ENCODE measurements at regions of chr4 and their contacts with region 1.

Region 1: DNA sequence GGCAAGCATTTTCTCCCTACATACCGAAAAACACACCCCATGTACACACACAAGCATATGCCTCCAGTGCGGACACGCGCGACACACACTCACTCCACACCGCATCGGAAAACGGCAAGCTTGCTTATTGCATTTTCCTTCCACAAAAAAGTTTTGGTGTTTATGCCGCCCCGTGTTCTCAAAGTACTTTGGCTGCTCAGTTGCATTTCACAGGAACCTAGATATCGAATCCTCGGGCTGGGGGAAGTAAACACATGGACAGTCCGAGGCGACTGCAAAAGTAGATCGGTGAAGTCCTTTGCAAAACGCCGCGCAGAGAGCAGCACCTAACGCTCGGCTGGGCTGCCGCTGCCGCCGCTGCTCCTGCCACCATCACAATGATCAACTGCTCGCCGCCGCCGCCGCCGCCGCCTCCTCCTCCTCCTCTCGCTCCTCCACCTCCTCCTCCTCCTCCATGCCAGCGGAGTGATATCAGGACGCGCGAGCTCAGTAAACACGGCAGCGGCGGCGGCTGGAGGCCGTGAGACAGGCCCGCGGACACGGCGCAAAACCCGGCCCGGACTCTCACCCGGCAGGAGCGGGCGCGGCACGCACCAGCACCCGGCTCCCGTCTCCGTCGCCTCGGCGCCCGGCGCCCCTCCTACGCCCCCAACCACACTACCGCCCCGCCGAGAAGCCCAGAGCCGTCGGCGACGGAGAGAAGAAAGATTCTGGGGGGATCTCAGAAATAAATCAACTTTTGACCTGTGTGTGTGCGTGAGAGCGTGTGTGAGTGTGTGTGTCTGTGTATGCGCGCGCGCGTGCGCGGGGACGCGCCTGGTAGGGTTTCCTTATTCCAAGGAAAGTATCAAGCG is at the start of gene MAML3:
- DNase-seq: peak; percentile 73 to 89 (median 83)
- ATAC-seq: peak; percentile 58
- H3K4me3 ChIP-seq: peak within 1 kb of the TSS; percentile 99
- H3K4me3 Mint-ChIP-seq: peak within 1 kb of the TSS; percentile 89 to 100 (median 96)
- H3K27ac ChIP-seq: peak within 1 kb of the TSS; percentile 84
- H3K27ac Mint-ChIP-seq: peak within 1 kb of the TSS; percentile 81 to 96 (median 93)
- H3K4me1 ChIP-seq: peaks cover 0 to 13% of the 10 kb centered on the region in 2 donors
- H3K4me1 Mint-ChIP-seq: peaks cover 4 to 47% (median 32%) of the 10 kb centered on the region in 7 donors
- H3K27me3 ChIP-seq: no peaks in the 10 kb centered on the region
- H3K27me3 Mint-ChIP-seq: peaks cover 0 to 75% (median 0%) of the 10 kb centered on the region in 5 donors
- total RNA-seq, gene MAML3: 1.4 to 9.4 (median 3.6) TPM

Region 2: GRCh38 chr4:139301113-139301820 is 852.7 kb before region 1 on chr4 and contains the start of gene NAA15:
- CTCF ChIA-PET with region 1: no interaction called
- POLR2A ChIA-PET with region 1: no interaction called
- intact Hi-C with region 1: loop called (anchors 1 to 5 kb)
- DNase-seq: peak; percentile 88 to 99 (median 97)
- ATAC-seq: peak; percentile 95
- H3K4me3 ChIP-seq: peak within 1 kb of the TSS; percentile 83
- H3K4me3 Mint-ChIP-seq: peak within 1 kb of the TSS; percentile 96 to 100 (median 100)
- H3K27ac ChIP-seq: peak within 1 kb of the TSS; percentile 92
- H3K27ac Mint-ChIP-seq: peak within 1 kb of the TSS; percentile 97 to 100 (median 99)
- H3K4me1 ChIP-seq: peaks cover 22 to 28% of the 10 kb centered on the region in 2 donors
- H3K4me1 Mint-ChIP-seq: peaks cover 17 to 76% (median 58%) of the 10 kb centered on the region in 7 donors
- H3K27me3 ChIP-seq: no peaks in the 10 kb centered on the region
- H3K27me3 Mint-ChIP-seq: no peaks in the 10 kb centered on the region
- total RNA-seq, gene NAA15: 41.2 to 67.4 (median 49.0) TPM

Region 3: DNA sequence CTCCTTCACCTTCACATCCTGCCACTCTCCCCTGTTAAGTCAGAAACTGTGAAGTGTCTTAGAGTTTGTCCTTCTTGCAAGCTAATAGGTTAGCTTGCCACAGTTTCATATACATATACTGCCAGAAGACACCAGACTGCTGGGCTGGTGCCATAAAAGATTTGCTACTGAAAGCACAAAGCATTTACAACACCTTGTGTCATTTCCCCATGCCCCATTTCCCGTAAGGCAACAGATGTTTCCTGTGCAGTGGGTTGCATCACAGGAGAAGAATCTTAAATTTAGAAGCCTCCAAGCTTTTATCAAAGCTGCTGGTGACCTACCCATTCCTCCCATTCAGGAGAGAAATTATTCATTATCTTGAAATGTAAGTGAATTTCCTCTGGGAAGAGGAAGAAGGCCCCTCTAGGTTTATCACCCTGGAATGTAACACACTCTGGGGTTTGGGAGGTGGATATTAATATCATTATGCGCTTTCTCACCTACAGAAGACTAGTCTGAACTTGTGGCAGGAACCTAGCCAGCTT is 734.5 kb before region 1 on chr4:
- CTCF ChIA-PET with region 1: no interaction called
- POLR2A ChIA-PET with region 1: no interaction called
- intact Hi-C with region 1: no loop called
- DNase-seq: peak in 4 of 9 donors; percentile 7 to 29 (median 14)
- ATAC-seq: peak; percentile 72
- H3K4me3 ChIP-seq: no peak overlapping the region
- H3K4me3 Mint-ChIP-seq: peak overlapping the region in 3 of 10 donors; percentile 30 to 49 (median 40)
- H3K27ac ChIP-seq: no peak overlapping the region
- H3K27ac Mint-ChIP-seq: peak overlapping the region in 7 of 9 donors; percentile 29 to 76 (median 64)
- H3K4me1 ChIP-seq: no peaks in the 10 kb centered on the region
- H3K4me1 Mint-ChIP-seq: peaks cover 0 to 19% (median 13%) of the 10 kb centered on the region in 7 donors
- H3K27me3 ChIP-seq: no peaks in the 10 kb centered on the region
- H3K27me3 Mint-ChIP-seq: no peaks in the 10 kb centered on the region

Region 4: DNA sequence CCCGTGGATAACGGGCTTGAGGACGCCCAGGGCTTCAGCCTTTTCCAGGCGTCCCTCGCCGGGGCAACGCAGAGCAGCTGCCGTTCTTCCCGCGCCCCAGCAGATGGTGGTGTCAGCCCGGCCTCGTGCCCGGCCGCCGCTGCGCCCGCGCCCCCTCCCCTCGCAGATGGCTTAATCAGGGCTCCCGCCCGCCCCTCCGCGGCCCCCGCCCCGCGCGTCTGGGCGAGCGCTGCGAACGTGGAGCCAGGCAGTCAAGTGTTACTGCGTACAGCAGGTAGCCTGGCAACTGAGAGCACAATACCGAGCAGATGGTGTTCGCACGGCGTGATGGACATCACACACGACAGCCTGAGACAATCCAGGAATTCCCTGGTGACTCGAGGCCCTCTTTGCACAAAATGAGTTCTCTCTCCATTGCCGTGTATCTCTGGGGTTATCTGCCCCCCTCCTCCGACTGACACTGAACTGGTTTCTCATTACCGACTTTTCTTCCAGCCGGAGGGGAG is 419.0 kb before region 1 on chr4:
- CTCF ChIA-PET with region 1: no interaction called
- POLR2A ChIA-PET with region 1: no interaction called
- intact Hi-C with region 1: loop called (anchors 5 kb)
- DNase-seq: peak; percentile 12 to 67 (median 45)
- ATAC-seq: peak; percentile 87
- H3K4me3 ChIP-seq: peak overlapping the region; percentile 44
- H3K4me3 Mint-ChIP-seq: peak overlapping the region; percentile 70 to 89 (median 78)
- H3K27ac ChIP-seq: no peak overlapping the region
- H3K27ac Mint-ChIP-seq: peak overlapping the region in 1 of 9 donors; percentile 29
- H3K4me1 ChIP-seq: peaks cover 0 to 5% of the 10 kb centered on the region in 2 donors
- H3K4me1 Mint-ChIP-seq: peaks cover 6 to 17% (median 13%) of the 10 kb centered on the region in 7 donors
- H3K27me3 ChIP-seq: no peaks in the 10 kb centered on the region
- H3K27me3 Mint-ChIP-seq: peaks cover 30 to 58% (median 39%) of the 10 kb centered on the region in 5 donors

Region 5: DNA sequence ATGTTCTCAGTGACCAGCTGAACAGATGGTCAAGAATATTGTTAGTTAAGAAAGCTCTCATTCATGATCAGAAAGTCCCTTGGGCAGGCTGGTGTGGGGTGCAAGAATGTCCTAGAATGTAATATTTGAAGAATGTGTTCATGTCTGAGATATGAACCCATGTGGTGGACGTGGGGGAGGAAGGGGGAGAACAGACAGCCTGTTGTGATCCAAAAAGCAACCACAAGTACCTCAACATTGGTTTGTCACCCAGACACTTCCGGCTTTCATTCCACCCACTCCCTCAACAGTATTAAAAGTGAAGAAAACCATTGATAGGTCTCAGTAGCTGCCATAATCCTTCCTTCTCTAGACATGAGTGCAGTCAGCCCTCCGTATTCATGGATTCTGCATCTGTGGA is 82.1 kb before region 1 on chr4:
- CTCF ChIA-PET with region 1: interaction called, 5 read pairs
- POLR2A ChIA-PET with region 1: interaction called, 53 read pairs
- intact Hi-C with region 1: loop called (anchors 1 kb)
- DNase-seq: peak in 8 of 9 donors; percentile 62 to 84 (median 78)
- ATAC-seq: peak; percentile 91
- H3K4me3 ChIP-seq: peak overlapping the region; percentile 33
- H3K4me3 Mint-ChIP-seq: peak overlapping the region; percentile 69 to 91 (median 82)
- H3K27ac ChIP-seq: peak overlapping the region; percentile 54
- H3K27ac Mint-ChIP-seq: peak overlapping the region; percentile 84 to 98 (median 91)
- H3K4me1 ChIP-seq: peaks cover 18 to 30% of the 10 kb centered on the region in 2 donors
- H3K4me1 Mint-ChIP-seq: peaks cover 41 to 61% (median 56%) of the 10 kb centered on the region in 7 donors
- H3K27me3 ChIP-seq: no peaks in the 10 kb centered on the region
- H3K27me3 Mint-ChIP-seq: peaks cover 0 to 59% (median 0%) of the 10 kb centered on the region in 5 donors

Region 6: DNA sequence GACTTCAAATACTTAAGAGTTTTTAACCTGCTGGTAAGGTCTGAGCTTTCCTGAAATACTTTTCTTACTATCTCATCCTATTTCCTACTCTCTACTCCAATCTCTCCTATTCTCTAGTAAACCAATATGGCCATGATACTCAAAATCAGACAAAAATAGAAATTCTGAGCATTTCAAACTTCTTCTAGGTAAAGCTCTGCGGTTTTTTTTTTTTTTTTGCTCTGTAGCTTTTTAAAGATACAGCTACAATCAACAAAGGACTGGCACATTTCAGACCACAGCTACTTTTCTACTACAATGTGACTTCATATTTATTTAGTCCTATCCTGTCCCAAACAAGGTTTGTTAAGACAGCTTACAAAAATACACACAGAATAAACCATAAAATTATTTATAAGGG is 31.1 kb before region 1 on chr4:
- CTCF ChIA-PET with region 1: no interaction called
- POLR2A ChIA-PET with region 1: interaction called, 4 read pairs
- intact Hi-C with region 1: loop called (anchors 1 kb)
- DNase-seq: peak in 4 of 9 donors; percentile 13 to 34 (median 22)
- ATAC-seq: no peak
- H3K4me3 ChIP-seq: no peak overlapping the region
- H3K4me3 Mint-ChIP-seq: peak overlapping the region in 9 of 10 donors; percentile 36 to 76 (median 65)
- H3K27ac ChIP-seq: no peak overlapping the region
- H3K27ac Mint-ChIP-seq: peak overlapping the region in 6 of 9 donors; percentile 3 to 71 (median 9)
- H3K4me1 ChIP-seq: peaks cover 0 to 16% of the 10 kb centered on the region in 2 donors
- H3K4me1 Mint-ChIP-seq: peaks cover 6 to 29% (median 20%) of the 10 kb centered on the region in 7 donors
- H3K27me3 ChIP-seq: no peaks in the 10 kb centered on the region
- H3K27me3 Mint-ChIP-seq: peaks cover 0 to 45% (median 0%) of the 10 kb centered on the region in 5 donors

Region 7: GRCh38 chr4:140373328-140374129 is 219.6 kb after region 1 on chr4 and contains the start of gene SCOC:
- CTCF ChIA-PET with region 1: no interaction called
- POLR2A ChIA-PET with region 1: interaction called, 5 read pairs
- intact Hi-C with region 1: loop called (anchors 1 kb)
- DNase-seq: peak; percentile 80 to 98 (median 95)
- ATAC-seq: peak; percentile 98
- H3K4me3 ChIP-seq: peak within 1 kb of the TSS; percentile 79
- H3K4me3 Mint-ChIP-seq: peak within 1 kb of the TSS in 2 of 10 donors; percentile 87 to 90
- H3K27ac ChIP-seq: peak within 1 kb of the TSS; percentile 86
- H3K27ac Mint-ChIP-seq: peak within 1 kb of the TSS in 5 of 9 donors; percentile 47 to 90 (median 51)
- H3K4me1 ChIP-seq: peaks cover 6 to 7% of the 10 kb centered on the region in 2 donors
- H3K4me1 Mint-ChIP-seq: peaks cover 29 to 49% (median 43%) of the 10 kb centered on the region in 7 donors
- H3K27me3 ChIP-seq: no peaks in the 10 kb centered on the region
- H3K27me3 Mint-ChIP-seq: peaks cover 0 to 17% (median 0%) of the 10 kb centered on the region in 5 donors
- total RNA-seq, gene SCOC: 9.3 to 26.3 (median 22.6) TPM